SK-N-SH (cell line): ENCODE measurements at regions of chr1 and their contacts with region 1.

Region 1: DNA sequence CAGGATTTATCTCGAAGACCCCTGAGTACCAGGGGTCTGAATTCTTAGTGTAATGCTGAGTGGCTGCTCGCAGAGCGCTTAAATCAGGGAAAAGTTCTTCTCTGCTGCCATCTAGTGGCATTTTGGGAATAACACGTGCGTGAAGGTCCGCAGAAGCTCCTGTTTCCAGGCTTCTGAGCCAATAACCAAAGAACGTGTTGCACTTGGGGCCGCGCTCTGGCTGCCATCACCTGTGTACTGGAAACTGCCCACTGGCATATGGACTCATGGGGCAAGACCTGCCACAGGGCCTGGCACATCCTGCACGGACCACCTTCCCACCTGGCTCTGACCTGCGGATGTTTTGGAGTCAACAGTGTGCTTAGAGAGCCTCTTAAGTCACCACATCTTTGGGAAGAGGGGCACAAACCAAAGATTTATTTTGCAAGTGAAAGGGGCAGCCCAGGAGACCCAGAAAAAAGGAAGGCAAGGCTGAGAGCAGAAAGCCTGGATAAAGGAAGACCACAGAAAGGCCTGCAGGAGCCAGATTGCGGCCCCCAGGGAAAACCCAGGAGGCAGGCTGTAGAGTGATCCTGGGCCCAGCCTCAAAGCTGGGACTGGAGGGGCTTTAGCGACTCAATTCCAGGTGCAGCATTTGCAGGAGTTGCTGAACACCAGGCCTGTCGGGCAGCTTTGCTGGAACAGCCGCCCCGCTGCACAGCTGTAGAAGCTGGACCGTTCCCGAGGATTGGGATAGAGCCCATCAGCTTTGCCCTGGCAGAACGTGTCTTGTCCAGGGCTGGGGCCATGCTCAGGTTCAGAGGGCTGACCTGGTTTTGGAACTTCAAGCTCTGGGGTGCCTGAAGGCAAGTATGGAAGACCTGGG is 13.0 kb downstream of the CHIT1 start:
- DNase-seq: peak; percentile 74
- H3K4me3 ChIP-seq: no peak overlapping the region; a peak in 1 of 4 replicates
- H3K27ac ChIP-seq: no peak overlapping the region
- H3K4me1 ChIP-seq: peaks cover 0 to 2% of the 10 kb centered on the region in 2 experiments; a peak in 1 of 4 replicates
- H3K27me3 ChIP-seq: peaks cover 18% of the 10 kb centered on the region
- CTCF ChIP-seq: peak; percentile 79
- EP300 ChIP-seq: no peak
- RAD21 ChIP-seq: peak; percentile 94

Region 2: GRCh38 chr1:203046984-203047630 is 169.4 kb before region 1 on chr1:
- CTCF ChIA-PET with region 1: interaction called, 454 read pairs
- POLR2A ChIA-PET with region 1: no interaction called
- DNase-seq: no peak
- H3K4me3 ChIP-seq: no peak overlapping the region
- H3K27ac ChIP-seq: peak overlapping the region in 1 of 2 experiments; percentile 24; a peak in 1 of 4 replicates
- H3K4me1 ChIP-seq: peaks cover 9 to 13% of the 10 kb centered on the region in 2 experiments; a peak in 3 of 4 replicates
- H3K27me3 ChIP-seq: no peaks in the 10 kb centered on the region
- CTCF ChIP-seq: no peak
- EP300 ChIP-seq: no peak; a peak in 1 of 4 replicates
- RAD21 ChIP-seq: no peak

Region 3: GRCh38 chr1:203084588-203085502 is 131.7 kb before region 1 on chr1:
- CTCF ChIA-PET with region 1: interaction called, 18 read pairs
- POLR2A ChIA-PET with region 1: no interaction called
- DNase-seq: no peak
- H3K4me3 ChIP-seq: no peak overlapping the region; a peak in 1 of 4 replicates
- H3K27ac ChIP-seq: no peak overlapping the region
- H3K4me1 ChIP-seq: no peaks in the 10 kb centered on the region; a peak in 1 of 4 replicates
- H3K27me3 ChIP-seq: no peaks in the 10 kb centered on the region; the same call in 1 of the 2 replicates
- CTCF ChIP-seq: peak; percentile 57
- EP300 ChIP-seq: no peak
- RAD21 ChIP-seq: no peak

Region 4: DNA sequence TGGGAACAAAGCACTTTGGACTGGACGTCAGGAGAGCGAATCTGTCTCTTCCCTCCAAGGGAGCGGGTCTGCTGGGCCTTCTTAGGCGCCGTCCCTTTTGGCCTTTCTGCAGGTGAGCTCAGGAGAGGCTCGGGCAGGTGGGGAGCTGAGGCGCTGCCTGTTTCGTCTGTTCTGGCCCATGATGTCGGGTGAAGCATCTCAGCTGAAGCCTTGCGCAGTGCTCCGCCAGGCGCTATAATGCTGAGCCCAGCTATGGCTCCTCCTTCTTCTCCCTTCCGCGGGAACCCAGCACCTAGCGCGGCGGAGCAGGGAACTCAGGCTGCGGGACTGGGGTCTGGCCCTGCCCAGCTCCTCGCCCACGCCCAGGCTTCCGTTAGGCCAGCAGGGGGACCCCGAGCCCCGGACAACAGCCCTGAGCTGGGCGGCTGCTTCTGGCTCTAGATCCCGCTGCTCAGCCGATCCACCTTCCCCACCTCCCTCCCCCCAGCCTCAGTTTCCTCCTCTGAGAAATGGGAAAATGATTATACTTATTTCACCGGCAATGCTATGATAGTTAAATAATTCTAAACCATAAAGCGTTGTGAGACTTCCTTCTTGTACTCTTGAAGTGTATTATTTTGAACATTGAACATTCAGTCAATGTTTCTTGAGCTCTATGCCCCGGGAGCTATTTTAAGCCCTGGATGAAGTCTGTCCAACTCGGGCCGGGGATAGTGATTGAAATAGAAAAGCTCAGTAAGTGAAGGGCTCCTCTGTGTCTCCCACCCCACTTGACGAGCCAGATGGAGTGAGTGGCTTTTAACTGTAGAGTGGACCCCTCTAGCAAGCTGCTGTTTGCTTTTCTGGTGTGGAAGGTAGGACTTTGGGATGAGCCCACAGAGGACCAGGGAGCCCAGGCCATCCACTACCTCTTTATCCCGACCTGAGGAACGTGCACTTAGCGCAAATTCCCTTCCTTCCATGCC is 98.6 kb before region 1 on chr1:
- CTCF ChIA-PET with region 1: interaction called, 602 read pairs
- POLR2A ChIA-PET with region 1: interaction called, 12 read pairs
- DNase-seq: peak; percentile 95
- H3K4me3 ChIP-seq: peak overlapping the region in 1 of 2 experiments; percentile 35; a peak in 1 of 4 replicates
- H3K27ac ChIP-seq: no peak overlapping the region
- H3K4me1 ChIP-seq: no peaks in the 10 kb centered on the region; a peak in 1 of 4 replicates
- H3K27me3 ChIP-seq: peaks cover 11% of the 10 kb centered on the region
- CTCF ChIP-seq: peak; percentile 76
- EP300 ChIP-seq: no peak
- RAD21 ChIP-seq: peak; percentile 95

Region 5: DNA sequence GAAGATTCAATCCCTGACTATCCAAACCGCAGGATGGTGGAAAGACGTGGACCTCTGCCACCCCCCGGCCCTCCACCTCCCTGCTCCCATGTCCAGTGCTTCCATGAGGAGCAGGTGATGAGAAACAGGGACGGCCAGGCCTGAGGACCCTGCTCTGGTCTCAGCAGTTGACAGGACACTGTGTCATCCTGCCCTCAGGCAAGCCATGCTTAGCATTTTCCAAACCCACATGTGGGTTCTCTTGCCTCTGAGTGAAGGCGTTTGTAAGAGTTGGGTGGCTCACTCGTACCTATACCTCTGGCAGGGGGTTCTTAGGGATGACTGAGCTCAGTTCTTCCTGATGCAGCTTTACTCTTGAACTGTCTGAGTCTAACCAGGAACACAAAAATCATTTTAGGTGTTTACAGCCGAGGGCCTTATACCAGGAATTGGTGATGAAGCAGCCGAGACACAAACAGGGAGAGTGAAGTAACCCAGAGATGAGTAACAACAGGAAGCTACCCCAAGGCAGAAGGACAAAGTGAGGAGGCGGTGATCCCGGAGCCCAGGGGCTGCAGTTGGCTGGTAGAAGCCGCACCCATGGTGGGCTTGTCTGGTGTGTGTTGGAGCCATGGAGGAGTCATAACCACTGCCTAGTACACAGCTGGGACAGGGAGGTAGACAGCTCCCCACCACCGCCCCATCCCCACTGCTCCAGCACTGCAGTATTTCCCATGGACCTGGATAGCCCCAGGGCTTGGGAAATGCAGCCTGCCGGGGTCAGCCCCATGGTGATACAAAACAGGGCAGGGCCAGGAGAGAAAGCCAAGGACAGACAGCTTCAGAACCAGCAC is 62.3 kb before region 1 on chr1:
- CTCF ChIA-PET with region 1: interaction called, 19 read pairs
- POLR2A ChIA-PET with region 1: no interaction called
- DNase-seq: peak; percentile 55
- H3K4me3 ChIP-seq: no peak overlapping the region
- H3K27ac ChIP-seq: peak overlapping the region; percentile 44 to 48
- H3K4me1 ChIP-seq: peaks cover 28 to 38% of the 10 kb centered on the region in 2 experiments
- H3K27me3 ChIP-seq: no peaks in the 10 kb centered on the region
- CTCF ChIP-seq: no peak
- EP300 ChIP-seq: peak; percentile 3 to 27; a peak in 2 of 4 replicates
- RAD21 ChIP-seq: no peak

Region 6: DNA sequence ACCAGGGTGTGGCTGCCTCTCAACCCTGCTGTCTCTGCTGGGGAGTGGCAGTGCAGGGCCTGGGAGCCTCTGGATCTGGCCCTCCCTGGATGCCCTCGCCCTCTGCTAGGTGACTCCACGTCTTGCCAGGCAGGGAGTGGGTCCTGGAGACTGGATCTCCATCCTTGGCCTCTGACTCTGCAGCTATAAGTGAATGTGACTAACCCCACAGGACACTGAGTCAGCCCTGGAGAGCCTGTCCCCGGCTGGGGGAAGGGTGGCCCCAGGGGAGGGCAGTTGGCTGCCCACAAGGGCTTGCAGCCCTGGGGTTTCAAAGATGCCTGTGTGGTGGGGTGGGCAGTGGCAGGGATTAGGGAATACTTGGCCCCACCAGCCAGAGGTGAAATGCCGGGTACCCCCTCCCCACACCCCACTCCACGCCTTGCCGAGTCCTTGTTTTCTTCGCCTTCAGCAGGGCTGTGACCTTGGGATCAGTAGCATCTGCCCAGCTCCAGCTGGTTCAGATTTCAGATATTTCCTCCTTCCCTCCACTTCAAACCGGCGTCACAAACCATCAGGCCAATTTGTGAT is 39.0 kb before region 1 on chr1:
- CTCF ChIA-PET with region 1: interaction called, 25 read pairs
- POLR2A ChIA-PET with region 1: no interaction called
- DNase-seq: no peak
- H3K4me3 ChIP-seq: no peak overlapping the region
- H3K27ac ChIP-seq: peak overlapping the region in 1 of 2 experiments; percentile 57; a peak in 1 of 4 replicates
- H3K4me1 ChIP-seq: peaks cover 17 to 38% of the 10 kb centered on the region in 2 experiments; a peak in 2 of 4 replicates
- H3K27me3 ChIP-seq: no peaks in the 10 kb centered on the region
- CTCF ChIP-seq: no peak
- EP300 ChIP-seq: no peak
- RAD21 ChIP-seq: no peak

Region 7: GRCh38 chr1:203239526-203240305 is 23.2 kb after region 1 on chr1:
- CTCF ChIA-PET with region 1: interaction called, 28 read pairs
- POLR2A ChIA-PET with region 1: no interaction called
- DNase-seq: no peak
- H3K4me3 ChIP-seq: no peak overlapping the region
- H3K27ac ChIP-seq: no peak overlapping the region
- H3K4me1 ChIP-seq: no peaks in the 10 kb centered on the region
- H3K27me3 ChIP-seq: no peaks in the 10 kb centered on the region; the same call in 1 of the 2 replicates
- CTCF ChIP-seq: no peak
- EP300 ChIP-seq: no peak
- RAD21 ChIP-seq: no peak